Dendritic cell treated with granulocyte-macrophage colony-stimulating factor and Interleukin-4, amounts not matched to agents 40 ng/mL and 50 ng/mL, for 4 days (primary cell): ENCODE measurements at regions of chr10 and their contacts with region 1.

Region 1: DNA sequence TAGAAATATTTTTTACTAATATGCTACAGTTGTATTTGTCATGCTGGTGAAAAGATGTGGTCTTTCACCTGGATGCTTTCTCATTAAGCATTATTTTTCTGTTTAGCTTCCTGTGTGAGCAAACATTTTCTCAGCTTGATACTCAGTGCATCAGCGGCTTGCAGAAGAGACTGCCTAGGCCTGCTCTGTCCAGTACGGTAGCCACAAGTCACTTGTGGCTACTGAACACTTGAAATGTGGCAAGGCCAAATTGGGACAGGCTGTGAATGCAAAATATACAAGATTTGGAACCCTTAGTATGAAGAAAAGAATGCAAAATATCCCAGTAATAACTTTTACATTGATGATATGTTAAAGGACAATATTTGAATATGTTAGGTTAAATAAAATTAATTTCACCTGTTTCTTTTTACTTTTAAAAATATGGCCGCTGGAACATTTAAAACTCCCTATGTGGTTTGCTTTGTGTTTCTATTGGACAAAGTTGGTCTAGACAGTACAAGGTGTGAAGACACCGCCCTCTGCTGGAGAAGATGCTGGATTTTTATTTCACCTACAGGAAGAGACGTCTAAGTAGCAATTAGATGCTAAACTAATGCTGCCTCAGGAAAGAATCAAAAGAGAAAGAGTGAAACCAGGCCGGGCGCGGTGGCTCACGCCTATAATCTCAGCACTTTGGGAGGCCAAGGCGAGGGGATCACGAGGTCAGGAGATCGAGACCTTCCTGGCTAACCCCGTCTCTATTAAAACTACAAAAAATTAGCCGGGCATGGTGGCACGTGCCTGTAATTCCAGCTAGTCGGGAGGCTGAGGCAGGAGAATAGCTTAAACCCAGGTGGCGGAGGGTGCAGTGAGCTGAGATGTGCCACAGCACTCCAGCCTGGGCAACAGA is 5.3 kb downstream of the SRGN start:
- H3K4me3 Mint-ChIP-seq: peak overlapping the region; percentile 64
- H3K27ac Mint-ChIP-seq: peak overlapping the region; percentile 86
- H3K4me1 Mint-ChIP-seq: peaks cover 56% of the 10 kb centered on the region
- H3K27me3 Mint-ChIP-seq: no peaks in the 10 kb centered on the region

Region 2: DNA sequence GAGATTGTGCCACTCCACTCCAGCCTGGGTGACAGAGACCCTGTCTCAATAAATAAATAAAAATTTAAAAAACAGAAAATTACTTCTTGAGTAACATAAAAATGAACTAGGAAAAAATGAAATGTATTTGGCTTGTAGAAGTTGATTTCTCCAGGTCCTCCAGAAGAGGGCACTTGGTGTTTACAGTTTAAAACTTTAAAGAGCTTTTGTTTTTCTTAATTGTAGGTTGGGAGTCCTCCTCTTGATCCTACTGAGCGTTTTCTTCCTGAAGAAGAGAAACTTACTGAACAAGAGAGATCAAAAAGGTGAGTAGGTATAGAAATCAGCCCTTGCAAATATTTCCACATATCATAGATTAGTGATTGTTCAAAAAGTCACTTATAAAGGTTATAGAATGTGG is 88.4 kb before region 1 on chr10:
- intact Hi-C with region 1: loop called (anchors 2 kb)
- H3K4me3 Mint-ChIP-seq: no peak overlapping the region
- H3K27ac Mint-ChIP-seq: no peak overlapping the region
- H3K4me1 Mint-ChIP-seq: no peaks in the 10 kb centered on the region
- H3K27me3 Mint-ChIP-seq: no peaks in the 10 kb centered on the region